K562 (cell line): ENCODE measurements at regions of chr1 and their contacts with region 1.

Region 1: DNA sequence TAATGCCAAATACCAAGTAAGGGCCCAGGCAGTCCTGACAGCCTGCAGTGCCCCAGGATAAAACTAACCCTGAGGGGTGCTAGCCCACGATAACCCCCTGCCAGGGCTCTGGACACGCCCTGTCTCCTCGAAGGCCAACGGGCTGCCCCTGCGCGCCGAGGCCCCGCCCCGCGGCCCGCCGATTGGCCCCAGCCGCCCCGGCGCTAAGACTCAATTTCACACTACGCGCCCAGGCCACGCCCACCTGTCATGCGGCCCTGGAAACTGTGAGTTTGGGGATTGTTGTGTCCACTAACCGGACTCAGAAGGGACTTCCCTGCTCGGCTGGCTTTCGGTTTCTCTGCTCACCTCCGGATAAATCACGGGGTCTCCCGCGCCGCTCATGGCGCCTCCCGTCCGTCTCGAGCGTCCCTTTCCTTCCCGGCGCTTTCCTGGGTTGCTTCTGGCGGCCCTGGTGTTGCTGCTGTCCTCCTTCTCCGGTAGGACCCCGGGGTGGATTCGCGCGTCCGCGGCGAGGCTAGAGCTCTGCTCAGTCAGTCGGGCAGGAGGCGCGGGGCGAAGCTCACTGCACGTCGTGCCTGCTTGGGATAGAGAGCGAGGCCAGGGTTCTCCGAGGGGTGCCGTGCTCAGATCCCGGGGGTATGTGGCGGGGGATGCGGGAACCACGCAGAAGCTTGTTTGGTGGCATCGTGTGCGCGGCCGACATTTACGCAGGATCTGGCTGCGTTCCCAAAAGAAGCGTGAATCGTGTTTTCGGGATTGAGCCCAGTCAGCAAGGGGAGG is at the start of gene CR1L:
- DNase-seq: peak; percentile 95 to 99 (median 96)
- ATAC-seq: peak; percentile 87
- H3K4me3 ChIP-seq: peak within 1 kb of the TSS; percentile 67
- H3K27ac ChIP-seq: peak within 1 kb of the TSS; percentile 80
- H3K4me1 ChIP-seq: peaks cover 23 to 25% of the 10 kb centered on the region in 2 experiments
- H3K27me3 ChIP-seq: no peaks in the 10 kb centered on the region
- CTCF ChIP-seq: no peak
- EP300 ChIP-seq: no peak
- POLR2A ChIP-seq: peak; percentile 86
- RAD21 ChIP-seq: no peak
- polyA plus RNA-seq, gene CR1L: 53.4 to 74.8 TPM

Region 2: GRCh38 chr1:207626972-207627337 is 18.1 kb before region 1 on chr1:
- CTCF ChIA-PET with region 1: no interaction called
- POLR2A ChIA-PET with region 1: interaction called, 7 read pairs
- in situ Hi-C with region 1: no loop called
- intact Hi-C with region 1: loop called (anchors 2 kb)
- DNase-seq: no peak
- ATAC-seq: no peak
- H3K4me3 ChIP-seq: no peak overlapping the region
- H3K27ac ChIP-seq: peak overlapping the region; percentile 97
- H3K4me1 ChIP-seq: peaks cover 7 to 56% of the 10 kb centered on the region in 2 experiments
- H3K27me3 ChIP-seq: no peaks in the 10 kb centered on the region
- CTCF ChIP-seq: no peak
- EP300 ChIP-seq: no peak
- POLR2A ChIP-seq: no peak
- RAD21 ChIP-seq: no peak

Region 3: DNA sequence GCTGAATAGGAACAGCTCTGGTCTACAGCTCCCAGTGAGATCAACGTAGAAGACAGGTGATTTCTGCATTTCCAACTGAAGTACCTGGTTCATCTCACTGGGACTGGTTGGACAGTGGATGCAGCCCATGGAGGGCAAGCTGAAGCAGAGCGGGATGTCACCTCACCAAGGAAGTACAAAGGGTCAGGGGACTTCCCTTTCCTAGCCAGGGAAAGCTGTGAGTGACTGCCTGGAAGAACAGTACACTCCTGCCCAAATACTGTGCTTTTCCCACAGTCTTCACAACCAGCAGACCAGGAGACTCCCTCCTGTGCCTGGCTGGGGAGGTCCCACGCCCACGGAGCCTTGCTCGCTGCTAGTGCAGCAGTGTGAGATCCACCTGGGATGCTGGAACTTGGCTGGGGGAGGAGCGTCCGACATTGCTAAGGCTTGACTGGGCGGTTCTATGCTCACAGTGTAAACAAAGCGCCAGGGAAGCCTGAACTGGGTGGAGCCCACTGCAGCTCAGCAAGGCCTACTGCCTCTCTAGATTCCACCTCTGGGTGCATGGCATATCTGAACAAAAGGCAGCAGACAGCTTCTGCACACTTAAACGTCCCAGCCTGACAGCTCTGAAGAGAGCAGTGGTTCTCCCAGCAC is 14.6 kb after region 1 on chr1:
- CTCF ChIA-PET with region 1: no interaction called
- POLR2A ChIA-PET with region 1: interaction called, 21 read pairs
- in situ Hi-C with region 1: no loop called
- intact Hi-C with region 1: no loop called
- DNase-seq: no peak
- ATAC-seq: peak; percentile 76
- H3K4me3 ChIP-seq: no peak overlapping the region
- H3K27ac ChIP-seq: no peak overlapping the region
- H3K4me1 ChIP-seq: peaks cover 0 to 11% of the 10 kb centered on the region in 2 experiments; a peak in 2 of 5 replicates
- H3K27me3 ChIP-seq: no peaks in the 10 kb centered on the region
- CTCF ChIP-seq: no peak
- EP300 ChIP-seq: no peak
- POLR2A ChIP-seq: no peak
- RAD21 ChIP-seq: no peak

Region 4: GRCh38 chr1:207672522-207673130 is 27.6 kb after region 1 on chr1:
- CTCF ChIA-PET with region 1: no interaction called
- POLR2A ChIA-PET with region 1: interaction called, 5 read pairs
- in situ Hi-C with region 1: no loop called
- intact Hi-C with region 1: loop called (anchors 2 kb)
- DNase-seq: peak; percentile 48 to 79 (median 66)
- ATAC-seq: peak; percentile 87
- H3K4me3 ChIP-seq: no peak overlapping the region
- H3K27ac ChIP-seq: no peak overlapping the region
- H3K4me1 ChIP-seq: peaks cover 11 to 32% of the 10 kb centered on the region in 2 experiments; a peak in 4 of 5 replicates
- H3K27me3 ChIP-seq: no peaks in the 10 kb centered on the region
- CTCF ChIP-seq: peak; percentile 62 to 87 (median 78)
- EP300 ChIP-seq: no peak
- POLR2A ChIP-seq: no peak
- RAD21 ChIP-seq: peak; percentile 90 to 96

Region 5: DNA sequence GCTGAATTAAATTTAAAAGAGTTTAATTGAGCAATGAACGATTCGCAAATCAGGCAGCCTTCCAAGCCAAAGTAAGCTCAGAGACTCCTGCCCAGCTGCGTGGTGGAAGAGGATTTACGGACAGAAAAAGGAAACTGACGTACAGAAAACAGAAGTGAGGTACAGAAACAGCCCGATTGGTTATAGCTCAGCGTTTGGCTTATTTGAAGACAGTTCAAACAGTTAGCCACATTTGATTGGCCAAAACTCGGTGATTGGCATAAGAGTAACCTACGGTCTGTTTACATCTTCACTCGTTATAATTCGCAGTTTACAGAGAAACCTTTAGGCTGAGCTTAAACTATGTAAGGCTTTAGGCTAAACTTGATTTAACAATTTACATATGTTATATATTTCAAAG is 46.8 kb after region 1 on chr1:
- CTCF ChIA-PET with region 1: no interaction called
- POLR2A ChIA-PET with region 1: interaction called, 3 read pairs
- in situ Hi-C with region 1: no loop called
- intact Hi-C with region 1: loop called (anchors 2 kb)
- DNase-seq: peak in 2 of 4 experiments; percentile 37 to 78
- ATAC-seq: peak; percentile 74
- H3K4me3 ChIP-seq: no peak overlapping the region; the same call in 1 of the 2 replicates
- H3K27ac ChIP-seq: peak overlapping the region; percentile 54
- H3K4me1 ChIP-seq: peaks cover 5 to 12% of the 10 kb centered on the region in 2 experiments; a peak in 3 of 5 replicates
- H3K27me3 ChIP-seq: no peaks in the 10 kb centered on the region
- CTCF ChIP-seq: no peak
- EP300 ChIP-seq: no peak
- POLR2A ChIP-seq: no peak
- RAD21 ChIP-seq: no peak

Region 6: GRCh38 chr1:207944571-207944970 is 299.5 kb after region 1 on chr1:
- CTCF ChIA-PET with region 1: no interaction called
- POLR2A ChIA-PET with region 1: no interaction called
- in situ Hi-C with region 1: no loop called
- intact Hi-C with region 1: no loop called
- DNase-seq: no peak
- ATAC-seq: no peak
- H3K4me3 ChIP-seq: no peak overlapping the region
- H3K27ac ChIP-seq: no peak overlapping the region
- H3K4me1 ChIP-seq: peaks cover 0 to 5% of the 10 kb centered on the region in 2 experiments; a peak in 3 of 5 replicates
- H3K27me3 ChIP-seq: peaks cover 0 to 4% of the 10 kb centered on the region in 2 experiments; a peak in 1 of 5 replicates
- CTCF ChIP-seq: no peak
- EP300 ChIP-seq: no peak
- POLR2A ChIP-seq: no peak
- RAD21 ChIP-seq: no peak